Naive thymus-derived CD4-positive, alpha-beta T cell (primary cell): ENCODE measurements at regions of chr12 and their contacts with region 1.

Region 1: DNA sequence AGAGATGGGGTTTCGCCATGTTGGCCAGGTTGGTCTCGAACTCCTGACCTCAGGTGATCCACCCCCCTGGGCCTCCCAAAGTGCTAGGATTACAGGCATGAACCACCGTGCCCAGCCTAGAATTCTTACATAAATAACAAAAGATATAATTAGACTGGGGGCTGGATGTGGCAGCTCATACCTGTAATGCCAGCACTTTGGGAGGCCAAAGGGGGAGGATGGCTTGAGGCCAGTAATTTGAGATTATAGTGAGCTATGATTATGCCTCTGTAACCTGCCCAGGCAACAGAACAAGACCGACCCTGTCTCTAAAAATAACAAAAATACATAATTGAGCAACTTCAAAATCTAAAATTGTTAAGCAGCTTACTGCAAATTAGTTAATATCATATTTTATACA is 130.4 kb downstream of the ARID2 start:
- DNase-seq: no peak
- ATAC-seq: no peak
- H3K4me3 ChIP-seq: no peak overlapping the region
- H3K4me3 Mint-ChIP-seq: no peak overlapping the region
- H3K27ac ChIP-seq: no peak overlapping the region
- H3K27ac Mint-ChIP-seq: no peak overlapping the region
- H3K4me1 ChIP-seq: no peaks in the 10 kb centered on the region
- H3K4me1 Mint-ChIP-seq: peaks cover 0 to 16% (median 3%) of the 10 kb centered on the region in 7 donors
- H3K27me3 ChIP-seq: no peaks in the 10 kb centered on the region
- H3K27me3 Mint-ChIP-seq: no peaks in the 10 kb centered on the region

Region 2: DNA sequence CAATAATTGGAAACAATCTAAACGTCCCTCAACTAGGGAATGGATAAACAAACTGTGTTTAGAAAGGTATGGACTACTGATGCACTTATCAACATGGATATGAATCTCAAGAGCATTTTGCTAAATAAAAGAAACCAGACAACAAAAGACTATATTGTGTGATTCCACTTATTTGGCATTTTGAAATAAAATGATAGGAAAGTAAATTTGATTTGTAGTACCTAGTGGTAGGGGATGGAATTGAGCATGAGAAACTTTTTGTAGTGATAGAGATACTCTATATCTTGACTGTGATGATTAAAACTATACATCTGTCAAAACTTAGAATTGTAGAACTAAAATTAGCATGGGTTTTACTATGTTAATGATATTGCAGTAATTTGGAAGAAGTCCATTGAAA is 43.3 kb before region 1 on chr12:
- CTCF ChIA-PET with region 1: no interaction called
- POLR2A ChIA-PET with region 1: no interaction called
- intact Hi-C with region 1: loop called in 1 of 2 experiments (anchors 5 kb)
- DNase-seq: no peak
- ATAC-seq: no peak
- H3K4me3 ChIP-seq: no peak overlapping the region
- H3K4me3 Mint-ChIP-seq: no peak overlapping the region
- H3K27ac ChIP-seq: no peak overlapping the region
- H3K27ac Mint-ChIP-seq: peak overlapping the region in 1 of 9 donors; percentile 73
- H3K4me1 ChIP-seq: no peaks in the 10 kb centered on the region
- H3K4me1 Mint-ChIP-seq: peaks cover 0 to 8% (median 3%) of the 10 kb centered on the region in 7 donors
- H3K27me3 ChIP-seq: no peaks in the 10 kb centered on the region
- H3K27me3 Mint-ChIP-seq: no peaks in the 10 kb centered on the region

Region 3: DNA sequence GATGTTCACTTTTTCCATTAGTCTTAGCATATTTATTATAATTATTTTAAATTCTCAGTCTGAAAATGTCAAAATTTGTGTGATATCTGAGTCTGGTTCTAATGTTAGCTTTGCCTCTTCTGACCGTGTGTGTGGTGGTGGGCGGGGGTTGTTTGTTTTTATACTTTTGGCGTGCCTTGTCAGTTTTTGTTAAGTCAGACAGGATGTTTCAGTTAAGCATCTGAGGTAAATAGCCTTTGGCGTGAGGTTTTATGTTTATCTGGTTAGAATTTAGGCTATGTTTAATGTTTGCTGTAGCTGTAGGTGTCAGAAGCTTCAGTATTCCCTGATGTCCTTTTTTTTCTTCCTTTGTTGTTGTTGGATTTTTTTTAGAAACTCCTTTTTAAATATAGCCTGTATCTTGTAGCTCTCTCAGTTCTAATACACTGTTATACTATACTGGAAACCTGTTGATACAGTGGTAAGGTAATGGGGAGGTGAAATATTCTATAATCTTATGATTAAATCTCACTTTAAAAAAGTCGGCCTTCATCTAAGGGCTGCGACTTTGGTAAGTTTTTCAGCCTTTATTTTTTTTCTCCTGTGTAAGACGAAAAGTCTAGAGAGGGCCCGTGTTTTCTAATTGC is 18.8 kb after region 1 on chr12:
- CTCF ChIA-PET with region 1: no interaction called
- POLR2A ChIA-PET with region 1: no interaction called
- intact Hi-C with region 1: loop called in 1 of 2 experiments (anchors 2 kb)
- DNase-seq: peak in 1 of 9 donors; percentile 32
- ATAC-seq: peak; percentile 61
- H3K4me3 ChIP-seq: no peak overlapping the region
- H3K4me3 Mint-ChIP-seq: peak overlapping the region in 2 of 10 donors; percentile 53 to 73
- H3K27ac ChIP-seq: no peak overlapping the region
- H3K27ac Mint-ChIP-seq: peak overlapping the region in 8 of 9 donors; percentile 6 to 91 (median 31)
- H3K4me1 ChIP-seq: peaks cover 0 to 21% of the 10 kb centered on the region in 2 donors
- H3K4me1 Mint-ChIP-seq: peaks cover 22 to 61% (median 39%) of the 10 kb centered on the region in 7 donors
- H3K27me3 ChIP-seq: no peaks in the 10 kb centered on the region
- H3K27me3 Mint-ChIP-seq: no peaks in the 10 kb centered on the region